ENCODE measurements at regions of chr6 and their contacts with region 1.

Region 1: GRCh38 chr6:42928986-42929820 is at the start of gene CNPY3:
- DNase-seq: peak; percentile 91 to 98 (median 94)
- ATAC-seq: peak; percentile 77
- H3K4me3 ChIP-seq: peak within 1 kb of the TSS; percentile 70 to 82
- H3K4me3 Mint-ChIP-seq: peak within 1 kb of the TSS; percentile 99
- H3K27ac ChIP-seq: peak within 1 kb of the TSS; percentile 93 to 95
- H3K27ac Mint-ChIP-seq: peak within 1 kb of the TSS; percentile 98
- H3K4me1 ChIP-seq: peaks cover 43% of the 10 kb centered on the region
- H3K4me1 Mint-ChIP-seq: peaks cover 45% of the 10 kb centered on the region
- H3K27me3 ChIP-seq: no peaks in the 10 kb centered on the region
- H3K27me3 Mint-ChIP-seq: no peaks in the 10 kb centered on the region
- CTCF ChIP-seq: no peak
- total RNA-seq, gene CNPY3: 43.9 to 47.4 TPM

Region 2: GRCh38 chr6:42845327-42845694 is 83.9 kb before region 1 on chr6:
- CTCF ChIA-PET with region 1: no interaction called
- POLR2A ChIA-PET with region 1: no interaction called
- intact Hi-C with region 1: no loop called
- DNase-seq: no peak
- ATAC-seq: no peak
- H3K4me3 ChIP-seq: no peak overlapping the region
- H3K4me3 Mint-ChIP-seq: no peak overlapping the region
- H3K27ac ChIP-seq: no peak overlapping the region
- H3K27ac Mint-ChIP-seq: peak overlapping the region; percentile 6
- H3K4me1 ChIP-seq: no peaks in the 10 kb centered on the region
- H3K4me1 Mint-ChIP-seq: peaks cover 15% of the 10 kb centered on the region
- H3K27me3 ChIP-seq: no peaks in the 10 kb centered on the region
- H3K27me3 Mint-ChIP-seq: no peaks in the 10 kb centered on the region
- CTCF ChIP-seq: no peak

Region 3: GRCh38 chr6:42879372-42880239 is 49.6 kb before region 1 on chr6 and contains the start of gene RPL7L1:
- CTCF ChIA-PET with region 1: interaction called, 3 read pairs
- POLR2A ChIA-PET with region 1: interaction called, 10 read pairs
- intact Hi-C with region 1: loop called (anchors 1 to 2 kb)
- DNase-seq: peak; percentile 69 to 93 (median 82)
- ATAC-seq: peak; percentile 92
- H3K4me3 ChIP-seq: peak within 1 kb of the TSS; percentile 71 to 83
- H3K4me3 Mint-ChIP-seq: peak within 1 kb of the TSS; percentile 98
- H3K27ac ChIP-seq: peak within 1 kb of the TSS; percentile 92 to 94
- H3K27ac Mint-ChIP-seq: peak within 1 kb of the TSS; percentile 99
- H3K4me1 ChIP-seq: peaks cover 19% of the 10 kb centered on the region
- H3K4me1 Mint-ChIP-seq: peaks cover 27% of the 10 kb centered on the region
- H3K27me3 ChIP-seq: no peaks in the 10 kb centered on the region
- H3K27me3 Mint-ChIP-seq: no peaks in the 10 kb centered on the region
- CTCF ChIP-seq: no peak
- total RNA-seq, gene RPL7L1: 67.9 to 68.6 TPM

Region 4: GRCh38 chr6:42901536-42901957 is 27.7 kb before region 1 on chr6:
- CTCF ChIA-PET with region 1: interaction called, 11 read pairs
- POLR2A ChIA-PET with region 1: interaction called, 4 read pairs
- intact Hi-C with region 1: loop called (anchors 1 to 2 kb)
- DNase-seq: peak; percentile 32 to 89 (median 67)
- ATAC-seq: peak; percentile 100
- H3K4me3 ChIP-seq: no peak overlapping the region
- H3K4me3 Mint-ChIP-seq: peak overlapping the region; percentile 63
- H3K27ac ChIP-seq: no peak overlapping the region
- H3K27ac Mint-ChIP-seq: no peak overlapping the region
- H3K4me1 ChIP-seq: peaks cover 6% of the 10 kb centered on the region
- H3K4me1 Mint-ChIP-seq: peaks cover 17% of the 10 kb centered on the region
- H3K27me3 ChIP-seq: no peaks in the 10 kb centered on the region
- H3K27me3 Mint-ChIP-seq: no peaks in the 10 kb centered on the region
- CTCF ChIP-seq: peak; percentile 92

Region 5: DNA sequence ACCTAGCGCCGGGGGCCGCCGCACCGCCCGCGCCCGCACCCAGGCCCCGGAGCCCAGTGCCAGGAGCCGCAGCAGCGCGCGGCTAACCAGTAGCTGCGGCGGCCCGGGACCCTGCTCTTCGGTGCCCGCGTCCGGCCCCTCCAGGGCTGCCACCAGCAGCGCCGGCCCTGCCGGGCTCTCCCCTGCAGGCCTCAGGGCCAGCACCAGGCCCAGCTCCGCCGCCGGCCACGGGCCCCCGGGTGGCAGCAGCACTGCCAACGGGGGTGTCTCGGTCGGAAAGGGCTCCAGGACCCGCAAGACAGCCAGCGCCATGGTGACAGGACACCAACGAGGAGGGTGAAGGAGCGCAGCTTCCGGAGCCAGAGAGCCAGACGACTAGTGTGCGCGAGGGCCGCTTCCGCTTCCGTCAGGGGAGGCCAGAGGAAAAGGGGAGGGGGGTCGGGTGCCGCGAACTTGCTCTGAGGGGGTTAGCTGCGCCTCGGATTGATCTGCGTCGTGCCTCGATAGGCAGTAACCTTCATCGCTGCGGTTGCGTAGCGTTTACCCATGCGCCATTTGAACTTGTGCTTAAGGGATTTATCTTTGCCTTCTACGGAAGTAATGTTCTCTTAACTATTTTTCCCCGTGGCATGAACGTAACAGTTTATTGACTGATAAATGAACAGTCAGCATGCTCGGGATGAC is 49.8 kb after region 1 on chr6 and contains the start of gene PEX6:
- CTCF ChIA-PET with region 1: interaction called, 9 read pairs
- POLR2A ChIA-PET with region 1: interaction called, 73 read pairs
- intact Hi-C with region 1: loop called (anchors 1 kb)
- DNase-seq: peak; percentile 77 to 98 (median 94)
- ATAC-seq: peak; percentile 89
- H3K4me3 ChIP-seq: peak within 1 kb of the TSS; percentile 49 to 71
- H3K4me3 Mint-ChIP-seq: peak within 1 kb of the TSS; percentile 90
- H3K27ac ChIP-seq: peak within 1 kb of the TSS; percentile 64 to 89
- H3K27ac Mint-ChIP-seq: peak within 1 kb of the TSS; percentile 95
- H3K4me1 ChIP-seq: peaks cover 45% of the 10 kb centered on the region
- H3K4me1 Mint-ChIP-seq: peaks cover 55% of the 10 kb centered on the region
- H3K27me3 ChIP-seq: no peaks in the 10 kb centered on the region
- H3K27me3 Mint-ChIP-seq: no peaks in the 10 kb centered on the region
- CTCF ChIP-seq: no peak
- total RNA-seq, gene PEX6: 6.7 to 6.8 TPM

Region 6: GRCh38 chr6:43013843-43014433 is 84.7 kb after region 1 on chr6 and contains the starts of genes KLHDC3 and MEA1:
- CTCF ChIA-PET with region 1: no interaction called
- POLR2A ChIA-PET with region 1: interaction called, 20 read pairs
- intact Hi-C with region 1: loop called (anchors 1 kb)
- DNase-seq: peak; percentile 95 to 100 (median 98)
- ATAC-seq: peak; percentile 96
- H3K4me3 ChIP-seq: peak within 1 kb of the TSS; percentile 79 to 84
- H3K4me3 Mint-ChIP-seq: peak within 1 kb of the TSS; percentile 95
- H3K27ac ChIP-seq: peak within 1 kb of the TSS; percentile 60 to 74
- H3K27ac Mint-ChIP-seq: peak within 1 kb of the TSS; percentile 94
- H3K4me1 ChIP-seq: peaks cover 29% of the 10 kb centered on the region
- H3K4me1 Mint-ChIP-seq: peaks cover 63% of the 10 kb centered on the region
- H3K27me3 ChIP-seq: no peaks in the 10 kb centered on the region
- H3K27me3 Mint-ChIP-seq: no peaks in the 10 kb centered on the region
- CTCF ChIP-seq: no peak
- total RNA-seq, gene KLHDC3: 20.9 to 21.7 TPM
- total RNA-seq, gene MEA1: 14.5 to 15.3 TPM

Region 7: GRCh38 chr6:43174263-43175112 is 245.3 kb after region 1 on chr6:
- CTCF ChIA-PET with region 1: no interaction called
- POLR2A ChIA-PET with region 1: interaction called, 6 read pairs
- intact Hi-C with region 1: loop called (anchors 1 kb)
- DNase-seq: peak; percentile 77 to 98 (median 92)
- ATAC-seq: peak; percentile 52
- H3K4me3 ChIP-seq: peak overlapping the region; percentile 4 to 50
- H3K4me3 Mint-ChIP-seq: peak overlapping the region; percentile 63
- H3K27ac ChIP-seq: peak overlapping the region; percentile 62 to 89
- H3K27ac Mint-ChIP-seq: peak overlapping the region; percentile 95
- H3K4me1 ChIP-seq: peaks cover 40% of the 10 kb centered on the region
- H3K4me1 Mint-ChIP-seq: peaks cover 45% of the 10 kb centered on the region
- H3K27me3 ChIP-seq: no peaks in the 10 kb centered on the region
- H3K27me3 Mint-ChIP-seq: no peaks in the 10 kb centered on the region
- CTCF ChIP-seq: no peak

Region 8: GRCh38 chr6:43369174-43370022 is 440.2 kb after region 1 on chr6 and contains the start of gene ZNF318:
- CTCF ChIA-PET with region 1: no interaction called
- POLR2A ChIA-PET with region 1: interaction called, 5 read pairs
- intact Hi-C with region 1: loop called in 1 of 2 experiments (anchors 1 kb)
- DNase-seq: peak; percentile 85 to 98 (median 93)
- ATAC-seq: peak; percentile 95
- H3K4me3 ChIP-seq: peak within 1 kb of the TSS; percentile 69 to 81
- H3K4me3 Mint-ChIP-seq: peak within 1 kb of the TSS; percentile 89
- H3K27ac ChIP-seq: peak within 1 kb of the TSS; percentile 76 to 87
- H3K27ac Mint-ChIP-seq: peak within 1 kb of the TSS; percentile 96
- H3K4me1 ChIP-seq: peaks cover 33% of the 10 kb centered on the region
- H3K4me1 Mint-ChIP-seq: peaks cover 43% of the 10 kb centered on the region
- H3K27me3 ChIP-seq: no peaks in the 10 kb centered on the region
- H3K27me3 Mint-ChIP-seq: no peaks in the 10 kb centered on the region
- CTCF ChIP-seq: no peak
- total RNA-seq, gene ZNF318: 18.2 TPM